Right ventricle myocardium superior (tissue), 1 donor: ENCODE measurements at regions of chr5 and their contacts with region 1.

Region 1: GRCh38 chr5:37615184-37615583 is 224.7 kb downstream of the GDNF start:
- DNase-seq: no peak
- ATAC-seq: no peak

Region 2: GRCh38 chr5:37847978-37848425 is 232.8 kb after region 1 on chr5:
- intact Hi-C with region 1: loop called (anchors 5 kb)
- DNase-seq: no peak
- ATAC-seq: no peak